Breast epithelium (tissue), 4 donors: ENCODE measurements at regions of chr9 and their contacts with region 1.

Region 1: DNA sequence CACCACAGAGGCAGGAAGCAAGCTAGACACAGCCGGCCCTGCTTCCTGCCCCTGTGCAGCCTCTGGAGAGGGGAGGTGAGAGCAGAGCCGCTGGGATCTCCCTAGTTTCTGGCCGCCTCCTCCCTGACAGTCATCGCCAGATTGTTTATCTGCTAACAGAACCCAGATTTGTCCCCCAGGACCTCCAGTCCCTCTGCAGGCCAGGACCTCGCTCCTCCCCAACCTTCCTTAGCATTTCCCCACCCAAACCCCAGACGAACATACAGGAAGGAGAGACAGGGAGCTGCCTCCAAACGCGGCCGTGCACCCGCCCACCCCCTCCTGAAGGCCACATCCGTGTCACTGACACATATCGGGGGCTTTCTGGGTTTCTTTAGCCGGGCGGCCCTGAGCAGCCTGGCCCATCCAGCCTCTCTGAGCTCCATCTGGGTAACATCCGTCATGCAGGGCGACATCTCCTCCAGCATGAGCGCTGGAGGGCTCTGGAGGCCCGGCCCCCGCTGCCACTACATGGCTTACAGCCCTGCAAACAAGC is 47.5 kb downstream of the DBH start:
- DNase-seq: no peak
- H3K4me3 ChIP-seq: no peak overlapping the region
- H3K27ac ChIP-seq: peak overlapping the region in 1 of 2 donors; percentile 44
- H3K4me1 ChIP-seq: peaks cover 0 to 2% of the 10 kb centered on the region in 2 donors
- H3K27me3 ChIP-seq: no peaks in the 10 kb centered on the region
- CTCF ChIP-seq: no peak
- POLR2A ChIP-seq: no peak

Region 2: DNA sequence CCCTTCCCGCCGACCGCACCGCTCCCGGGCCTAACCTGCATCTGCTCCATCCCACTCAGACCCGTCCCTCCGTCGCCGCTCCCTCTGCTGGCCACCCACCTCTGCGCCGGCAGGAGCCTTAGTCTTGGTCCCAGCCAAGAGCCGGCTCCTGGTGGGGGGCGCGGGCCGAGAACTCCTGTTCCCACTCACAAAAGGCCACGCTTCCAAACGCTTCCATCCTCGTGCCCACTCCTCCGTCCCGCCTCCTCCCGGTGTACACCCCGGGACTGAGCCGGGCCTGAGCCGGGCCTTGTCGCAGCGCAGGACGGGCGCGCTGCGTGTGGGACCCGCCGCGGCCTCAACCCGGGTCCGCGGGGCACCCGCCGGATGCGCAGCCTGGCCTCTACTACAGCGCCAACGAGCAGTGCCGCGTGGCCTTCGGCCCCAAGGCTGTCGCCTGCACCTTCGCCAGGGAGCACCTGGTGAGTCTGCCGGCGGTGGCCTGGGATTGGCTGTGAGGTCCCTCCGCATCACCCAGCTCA is 254.0 kb before region 1 on chr9:
- intact Hi-C with region 1: loop called (anchors 10 kb)
- DNase-seq: no peak
- H3K4me3 ChIP-seq: peak overlapping the region in 2 of 3 donors; percentile 53 to 73
- H3K27ac ChIP-seq: no peak overlapping the region
- H3K4me1 ChIP-seq: no peaks in the 10 kb centered on the region
- H3K27me3 ChIP-seq: no peaks in the 10 kb centered on the region
- CTCF ChIP-seq: peak in 1 of 3 donors; percentile 11
- POLR2A ChIP-seq: no peak